ENCODE measurements at regions of chr7 and their contacts with region 1.

Region 1: DNA sequence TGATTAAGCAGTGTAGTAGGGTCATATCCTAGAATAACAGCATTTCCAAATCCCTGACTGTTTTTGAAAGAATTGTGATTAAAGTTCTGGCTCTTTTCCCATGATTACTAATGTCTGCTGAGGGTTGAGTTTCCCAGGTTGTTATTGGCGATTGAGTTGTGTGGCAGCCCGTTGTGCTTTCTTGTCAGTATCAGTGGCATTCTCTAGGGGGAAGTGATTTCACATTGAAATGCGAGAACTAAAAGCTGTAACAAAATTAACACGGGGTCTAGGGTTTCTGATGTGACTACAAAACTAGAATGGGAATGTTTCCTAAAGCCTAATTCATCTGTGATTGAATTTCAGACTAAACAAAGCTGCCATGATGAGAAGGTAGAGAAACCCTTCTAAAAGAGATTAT is 349.4 kb downstream of the EXOC4 start:
- DNase-seq: no peak
- H3K4me3 ChIP-seq: no peak overlapping the region
- H3K4me3 Mint-ChIP-seq: no peak overlapping the region
- H3K27ac ChIP-seq: no peak overlapping the region
- H3K27ac Mint-ChIP-seq: no peak overlapping the region
- H3K4me1 ChIP-seq: no peaks in the 10 kb centered on the region
- H3K4me1 Mint-ChIP-seq: no peaks in the 10 kb centered on the region
- H3K27me3 ChIP-seq: no peaks in the 10 kb centered on the region
- H3K27me3 Mint-ChIP-seq: no peaks in the 10 kb centered on the region
- CTCF ChIP-seq: no peak

Region 2: GRCh38 chr7:133535308-133535707 is 67.0 kb before region 1 on chr7:
- intact Hi-C with region 1: loop called in 1 of 2 experiments (anchors 5 kb)
- DNase-seq: no peak
- H3K4me3 ChIP-seq: no peak overlapping the region
- H3K4me3 Mint-ChIP-seq: no peak overlapping the region
- H3K27ac ChIP-seq: no peak overlapping the region
- H3K27ac Mint-ChIP-seq: no peak overlapping the region
- H3K4me1 ChIP-seq: peaks cover 0 to 8% of the 10 kb centered on the region in 2 donors
- H3K4me1 Mint-ChIP-seq: peaks cover 17% of the 10 kb centered on the region
- H3K27me3 ChIP-seq: no peaks in the 10 kb centered on the region
- H3K27me3 Mint-ChIP-seq: no peaks in the 10 kb centered on the region
- CTCF ChIP-seq: no peak